K562 (cell line): ENCODE measurements at regions of chr5 and their contacts with region 1.

Region 1: GRCh38 chr5:99955962-99956361 is 579.2 kb upstream of the FAM174A start:
- DNase-seq: no peak
- ATAC-seq: no peak
- H3K4me3 ChIP-seq: no peak overlapping the region
- H3K27ac ChIP-seq: no peak overlapping the region
- H3K4me1 ChIP-seq: no peaks in the 10 kb centered on the region
- H3K27me3 ChIP-seq: no peaks in the 10 kb centered on the region
- CTCF ChIP-seq: no peak
- EP300 ChIP-seq: no peak
- POLR2A ChIP-seq: no peak
- RAD21 ChIP-seq: no peak

Region 2: GRCh38 chr5:99646011-99646647 is 309.8 kb before region 1 on chr5:
- CTCF ChIA-PET with region 1: no interaction called
- POLR2A ChIA-PET with region 1: no interaction called
- in situ Hi-C with region 1: loop called (anchors 10 kb)
- intact Hi-C with region 1: no loop called
- DNase-seq: no peak
- ATAC-seq: no peak
- H3K4me3 ChIP-seq: no peak overlapping the region
- H3K27ac ChIP-seq: no peak overlapping the region
- H3K4me1 ChIP-seq: no peaks in the 10 kb centered on the region
- H3K27me3 ChIP-seq: no peaks in the 10 kb centered on the region
- CTCF ChIP-seq: no peak
- EP300 ChIP-seq: no peak
- POLR2A ChIP-seq: no peak
- RAD21 ChIP-seq: no peak